GM10248 (cell line): ENCODE measurements at regions of chr11 and their contacts with region 1.

Region 1: DNA sequence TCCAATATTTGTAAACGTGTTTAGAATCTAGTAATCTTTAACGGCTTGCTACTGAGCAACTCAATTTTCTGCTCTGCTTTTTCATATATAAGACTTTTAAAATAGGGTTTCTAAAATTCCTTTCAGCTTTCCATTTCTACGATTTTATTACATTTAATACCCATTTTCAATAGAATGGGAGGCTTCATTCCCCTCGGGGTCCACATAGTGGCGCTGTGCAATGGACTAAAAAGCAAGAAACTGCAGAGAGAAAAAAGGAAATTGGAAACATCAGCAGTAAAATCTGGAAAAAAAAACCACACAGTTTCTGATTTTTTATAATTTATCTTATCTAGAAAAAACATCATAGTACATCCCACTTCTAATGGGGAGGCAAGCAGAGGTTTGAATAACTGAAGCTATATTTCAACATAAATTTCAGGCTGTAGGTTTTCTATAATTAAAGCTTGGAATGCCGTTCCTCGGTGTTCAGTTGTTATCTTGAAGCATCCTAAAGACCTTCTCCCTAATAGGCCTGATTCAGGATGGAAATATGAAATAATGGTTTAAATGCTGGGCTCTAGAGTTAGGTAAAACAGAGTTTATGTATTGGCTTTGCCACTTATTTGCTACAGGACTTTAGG is 18.7 kb upstream of the JHY start:
- DNase-seq: no peak
- CTCF ChIP-seq: peak; percentile 82

Region 2: DNA sequence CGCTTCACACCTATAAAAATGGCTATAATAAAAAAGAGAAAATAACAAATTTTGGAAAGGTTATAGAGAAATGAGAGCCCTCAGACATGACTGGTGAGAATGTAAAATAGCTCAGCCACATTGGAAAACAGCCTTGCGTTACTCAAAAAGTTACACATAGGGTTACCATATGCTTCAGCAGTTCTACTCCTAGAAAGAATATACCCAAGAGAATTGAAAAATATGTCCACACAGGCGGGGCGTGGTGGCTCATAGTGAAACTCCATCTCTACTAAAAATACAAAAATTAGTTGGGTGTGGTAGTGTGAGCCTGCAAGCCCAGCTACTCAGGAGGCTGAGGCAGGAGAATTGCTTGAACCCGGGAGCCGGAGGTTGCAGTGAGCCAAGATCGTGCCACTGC is 11.2 kb after region 1 on chr11:
- CTCF ChIA-PET with region 1: interaction called, 28 read pairs
- POLR2A ChIA-PET with region 1: interaction called, 4 read pairs
- DNase-seq: peak; percentile 29
- CTCF ChIP-seq: no peak

Region 3: DNA sequence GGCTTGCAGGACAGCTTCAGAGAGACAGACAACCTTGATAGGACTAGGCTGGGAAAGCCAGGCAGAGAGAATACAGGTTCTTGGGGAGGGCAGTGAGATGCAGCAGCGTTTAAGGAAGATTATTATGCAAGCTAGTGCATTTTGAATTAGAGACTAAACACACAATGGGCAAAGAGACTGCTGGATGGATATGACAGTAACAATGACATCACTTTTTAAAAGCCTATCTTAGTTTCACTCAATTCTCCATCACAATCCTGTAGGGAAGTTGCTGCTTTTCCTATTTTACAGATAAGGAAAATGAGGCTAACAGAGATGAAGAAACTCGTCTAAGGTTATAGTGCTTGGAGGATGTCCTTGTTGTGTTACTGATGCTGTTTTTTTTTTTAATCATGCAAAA is 24.3 kb after region 1 on chr11:
- CTCF ChIA-PET with region 1: interaction called, 14 read pairs
- POLR2A ChIA-PET with region 1: no interaction called
- DNase-seq: no peak
- CTCF ChIP-seq: no peak